HepG2 (cell line): ENCODE measurements at regions of chr1 and their contacts with region 1.

Region 1: GRCh38 chr1:97820470-97821188 is 100.2 kb downstream of the DPYD start:
- DNase-seq: peak; percentile 5
- ATAC-seq: peak; percentile 67
- H3K4me3 ChIP-seq: no peak overlapping the region
- H3K27ac ChIP-seq: no peak overlapping the region
- H3K4me1 ChIP-seq: no peaks in the 10 kb centered on the region
- H3K27me3 ChIP-seq: no peaks in the 10 kb centered on the region; a peak in 1 of 5 replicates
- CTCF ChIP-seq: peak; percentile 54
- EP300 ChIP-seq: no peak
- POLR2A ChIP-seq: no peak
- RAD21 ChIP-seq: no peak

Region 2: DNA sequence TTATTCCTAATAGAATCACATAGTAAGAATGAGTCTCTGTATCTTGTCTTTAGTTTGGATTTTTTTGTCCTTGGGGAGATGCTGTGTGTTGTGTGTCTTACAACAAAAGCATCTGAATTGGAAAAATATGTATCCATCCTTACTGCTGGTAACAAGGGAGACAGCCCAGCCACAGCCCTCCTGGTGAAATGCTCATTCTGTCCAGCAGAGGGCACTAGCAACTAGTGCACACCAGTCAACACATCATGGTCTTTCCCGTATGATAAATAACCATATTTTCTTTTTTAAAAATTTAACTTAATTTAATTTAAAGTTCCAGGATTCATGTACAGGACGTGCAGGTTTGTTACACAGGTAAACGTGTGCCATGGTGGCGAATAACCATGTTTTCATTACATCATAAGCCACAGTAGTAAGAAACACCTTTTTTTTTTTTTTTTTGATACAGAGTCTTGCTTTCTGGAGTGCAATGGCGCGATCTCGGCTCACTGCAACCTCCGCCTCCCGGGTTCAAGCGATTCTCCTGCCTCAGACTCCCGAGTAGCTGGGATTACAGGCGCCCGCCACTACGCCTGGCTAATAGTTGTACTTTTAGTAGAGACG is 854.0 kb before region 1 on chr1:
- CTCF ChIA-PET with region 1: no interaction called
- POLR2A ChIA-PET with region 1: no interaction called
- in situ Hi-C with region 1: no loop called
- intact Hi-C with region 1: loop called (anchors 1 kb)
- DNase-seq: peak; percentile 35
- ATAC-seq: peak; percentile 90
- H3K4me3 ChIP-seq: no peak overlapping the region
- H3K27ac ChIP-seq: no peak overlapping the region
- H3K4me1 ChIP-seq: no peaks in the 10 kb centered on the region
- H3K27me3 ChIP-seq: no peaks in the 10 kb centered on the region
- CTCF ChIP-seq: peak; percentile 75
- EP300 ChIP-seq: no peak
- POLR2A ChIP-seq: no peak
- RAD21 ChIP-seq: no peak

Region 3: GRCh38 chr1:97186404-97186803 is 634.2 kb before region 1 on chr1:
- CTCF ChIA-PET with region 1: no interaction called
- POLR2A ChIA-PET with region 1: no interaction called
- in situ Hi-C with region 1: no loop called
- intact Hi-C with region 1: loop called (anchors 5 kb)
- DNase-seq: peak; percentile 3
- ATAC-seq: no peak; the same call in 2 of the 3 replicates
- H3K4me3 ChIP-seq: no peak overlapping the region
- H3K27ac ChIP-seq: no peak overlapping the region
- H3K4me1 ChIP-seq: no peaks in the 10 kb centered on the region
- H3K27me3 ChIP-seq: no peaks in the 10 kb centered on the region; a peak in 1 of 5 replicates
- CTCF ChIP-seq: peak; percentile 33
- EP300 ChIP-seq: no peak
- POLR2A ChIP-seq: no peak
- RAD21 ChIP-seq: 0 out of 2 replicates have a peak, but pooled peaks have one; percentile 15